ENCODE measurements at regions of chr7 and their contacts with region 1.

Region 1: GRCh38 chr7:16982640-16983350 is 101.0 kb upstream of the AGR3 start:
- DNase-seq: no peak
- ATAC-seq: peak; percentile 61 to 69
- H3K4me3 ChIP-seq: no peak overlapping the region
- H3K27ac ChIP-seq: peak overlapping the region; percentile 28
- H3K4me1 ChIP-seq: peaks cover 30% of the 10 kb centered on the region
- H3K27me3 ChIP-seq: no peaks in the 10 kb centered on the region
- CTCF ChIP-seq: peak; percentile 89

Region 2: GRCh38 chr7:17301471-17302456 is 319.0 kb after region 1 on chr7:
- intact Hi-C with region 1: loop called (anchors 2 kb)
- DNase-seq: no peak
- ATAC-seq: no peak
- H3K4me3 ChIP-seq: peak overlapping the region; percentile 90
- H3K27ac ChIP-seq: peak overlapping the region; percentile 99
- H3K4me1 ChIP-seq: peaks cover 62% of the 10 kb centered on the region
- H3K27me3 ChIP-seq: no peaks in the 10 kb centered on the region
- CTCF ChIP-seq: peak; percentile 64

Region 3: GRCh38 chr7:17559388-17559787 is 576.6 kb after region 1 on chr7:
- intact Hi-C with region 1: loop called (anchors 10 kb)
- DNase-seq: no peak
- ATAC-seq: peak; percentile 35 to 43
- H3K4me3 ChIP-seq: no peak overlapping the region
- H3K27ac ChIP-seq: no peak overlapping the region
- H3K4me1 ChIP-seq: peaks cover 13% of the 10 kb centered on the region
- H3K27me3 ChIP-seq: no peaks in the 10 kb centered on the region
- CTCF ChIP-seq: no peak

Measured in lower lobe of right lung (tissue), 2 donors.